ENCODE measurements at regions of chr17 and their contacts with region 1.

Region 1: DNA sequence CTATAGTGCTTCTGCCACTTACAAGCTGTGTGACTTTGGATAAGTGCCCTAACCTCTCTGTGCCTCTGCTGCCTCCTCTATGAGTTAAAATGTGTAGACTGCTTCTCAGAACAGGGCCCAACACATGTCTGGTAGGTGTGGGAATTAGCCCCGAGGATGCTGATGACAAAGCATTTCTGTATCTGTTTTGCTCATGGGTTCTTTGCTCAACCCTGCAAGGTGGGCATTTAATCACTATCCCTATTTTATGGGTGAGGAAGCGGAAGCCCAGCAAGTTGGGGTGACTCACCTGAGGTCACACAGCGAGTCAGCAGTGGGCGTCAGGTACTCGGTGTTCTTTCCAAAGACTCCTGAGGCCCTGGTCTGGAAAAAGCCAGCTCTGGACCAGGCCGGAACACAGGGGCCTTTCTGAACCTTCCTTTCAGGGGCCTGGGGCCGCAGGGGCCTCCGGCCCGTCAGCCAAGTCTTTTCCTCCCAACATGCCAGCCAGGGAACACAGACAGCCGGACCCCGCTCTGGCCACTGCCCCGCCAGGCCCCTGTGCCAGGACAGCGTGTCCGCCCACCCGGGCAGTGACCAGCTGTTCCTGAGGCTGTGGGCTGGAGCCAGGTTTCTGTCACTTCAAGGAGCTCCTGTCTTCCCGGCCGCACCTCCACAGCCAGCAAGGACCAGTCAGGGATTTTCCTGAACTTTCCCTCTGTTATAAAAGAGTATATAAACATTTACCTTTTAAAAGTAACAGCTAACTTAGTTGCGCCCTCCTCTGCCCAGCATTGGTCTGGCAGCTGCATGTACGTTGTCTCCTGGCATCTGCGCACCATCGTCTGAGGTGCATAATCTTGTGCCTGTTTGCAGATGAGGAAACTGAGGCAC is 62.5 kb downstream of the SREBF1 start:
- DNase-seq: peak in 2 of 3 donors; percentile 55 to 59
- H3K4me3 ChIP-seq: no peak overlapping the region
- H3K27ac ChIP-seq: no peak overlapping the region
- H3K4me1 ChIP-seq: peaks cover 0 to 33% (median 19%) of the 10 kb centered on the region in 4 experiments
- H3K27me3 ChIP-seq: no peaks in the 10 kb centered on the region

Region 2: DNA sequence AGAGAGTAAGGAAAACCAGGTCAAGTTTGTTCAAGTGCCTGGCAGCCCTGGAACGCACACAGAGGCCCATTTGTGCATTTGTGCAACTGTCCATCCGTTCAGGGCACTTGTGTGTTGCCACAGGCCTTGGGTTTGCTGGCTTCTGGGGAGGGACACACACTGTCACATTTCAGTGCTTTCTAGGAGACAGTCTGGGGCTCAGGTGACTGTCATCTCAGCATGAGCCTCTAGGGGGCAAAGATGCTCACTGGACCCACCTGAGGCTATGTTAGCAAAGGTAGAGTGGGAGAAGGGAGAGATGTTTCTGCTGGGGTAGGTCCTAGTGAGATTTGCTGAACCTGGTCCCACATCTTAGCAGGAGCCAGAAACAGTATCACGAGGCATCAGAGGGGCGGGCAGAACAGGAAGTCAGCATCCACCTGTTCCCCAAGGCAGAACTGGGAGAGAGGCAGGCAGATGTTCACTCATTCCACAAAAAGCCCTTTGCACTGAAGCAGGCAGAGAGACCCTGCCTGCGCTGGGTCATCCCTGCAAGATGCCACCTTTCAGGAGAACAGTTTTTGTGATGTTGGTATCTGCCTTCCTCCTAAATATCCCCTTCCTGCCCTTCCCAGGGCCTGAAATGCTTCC is 44.5 kb before region 1 on chr17:
- CTCF ChIA-PET with region 1: interaction called, 13 read pairs
- POLR2A ChIA-PET with region 1: no interaction called
- DNase-seq: peak in 2 of 3 donors; percentile 33 to 41
- H3K4me3 ChIP-seq: no peak overlapping the region
- H3K27ac ChIP-seq: no peak overlapping the region
- H3K4me1 ChIP-seq: peaks cover 7 to 47% (median 33%) of the 10 kb centered on the region in 4 experiments
- H3K27me3 ChIP-seq: no peaks in the 10 kb centered on the region

Region 3: DNA sequence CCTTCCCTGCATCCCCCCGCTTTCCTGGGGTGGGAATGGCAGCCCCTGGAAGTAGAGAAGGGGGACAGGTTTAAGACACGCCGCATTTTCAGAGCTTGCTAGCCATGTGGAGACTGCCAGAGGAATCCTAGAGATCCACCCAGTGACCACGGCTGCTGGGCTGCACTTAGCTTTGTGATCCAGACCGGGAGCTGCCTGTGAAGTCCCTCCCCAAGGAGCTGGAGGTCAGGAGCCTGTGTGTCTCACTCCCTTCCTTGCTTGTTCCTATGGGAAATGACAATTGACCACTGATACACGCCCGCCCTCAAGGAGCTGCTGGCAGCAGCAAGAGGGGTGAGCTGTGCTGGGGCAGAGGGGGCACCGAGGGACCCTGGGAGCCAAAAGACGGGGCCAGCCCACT is 11.1 kb before region 1 on chr17:
- CTCF ChIA-PET with region 1: interaction called, 16 read pairs
- POLR2A ChIA-PET with region 1: interaction called, 3 read pairs
- DNase-seq: no peak
- H3K4me3 ChIP-seq: peak overlapping the region in 2 of 7 experiments; percentile 5 to 13
- H3K27ac ChIP-seq: peak overlapping the region in 1 of 2 experiments; percentile 73
- H3K4me1 ChIP-seq: peaks cover 5 to 99% (median 93%) of the 10 kb centered on the region in 4 experiments
- H3K27me3 ChIP-seq: no peaks in the 10 kb centered on the region

Region 4: GRCh38 chr17:17819561-17819995 is 45.3 kb after region 1 on chr17:
- CTCF ChIA-PET with region 1: no interaction called
- POLR2A ChIA-PET with region 1: no interaction called
- DNase-seq: peak; percentile 49 to 77 (median 74)
- H3K4me3 ChIP-seq: no peak overlapping the region
- H3K27ac ChIP-seq: no peak overlapping the region
- H3K4me1 ChIP-seq: peaks cover 6 to 52% (median 27%) of the 10 kb centered on the region in 4 experiments
- H3K27me3 ChIP-seq: no peaks in the 10 kb centered on the region

Region 5: GRCh38 chr17:17836250-17836817 is 62.1 kb after region 1 on chr17:
- CTCF ChIA-PET with region 1: no interaction called
- POLR2A ChIA-PET with region 1: no interaction called
- DNase-seq: peak; percentile 90 to 96 (median 92)
- H3K4me3 ChIP-seq: peak overlapping the region; percentile 62 to 91 (median 85)
- H3K27ac ChIP-seq: peak overlapping the region; percentile 58 to 76
- H3K4me1 ChIP-seq: peaks cover 18 to 73% (median 69%) of the 10 kb centered on the region in 4 experiments
- H3K27me3 ChIP-seq: no peaks in the 10 kb centered on the region

Region 6: DNA sequence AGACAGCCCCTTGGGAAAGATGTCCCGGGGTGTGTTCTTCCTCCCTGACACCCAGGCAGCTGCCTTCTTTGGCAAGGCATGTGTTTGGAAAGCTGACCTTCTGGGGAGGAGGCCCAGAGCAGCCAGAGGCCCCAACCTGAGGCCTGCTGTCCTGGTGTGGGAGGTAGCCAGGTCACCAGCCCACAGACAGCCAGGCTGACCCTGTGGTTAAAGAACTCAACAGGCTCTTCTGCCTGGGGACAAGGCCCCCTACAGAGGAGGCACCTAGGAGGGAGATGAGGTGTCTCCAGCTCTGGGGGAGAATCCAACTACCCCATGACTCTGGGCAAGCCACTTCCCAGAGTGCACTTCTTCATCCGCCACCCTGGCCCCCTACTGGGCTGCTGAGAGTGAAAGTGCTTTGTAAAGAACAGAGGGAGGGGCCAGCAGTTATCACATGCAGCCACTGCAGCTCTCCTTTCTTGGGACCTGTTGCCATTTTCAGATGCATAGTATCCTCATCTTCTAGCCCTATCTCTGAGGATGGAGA is 75.7 kb after region 1 on chr17:
- CTCF ChIA-PET with region 1: no interaction called
- POLR2A ChIA-PET with region 1: no interaction called
- DNase-seq: peak; percentile 56 to 85 (median 85)
- H3K4me3 ChIP-seq: peak overlapping the region in 1 of 7 experiments; percentile 33
- H3K27ac ChIP-seq: peak overlapping the region in 1 of 2 experiments; percentile 51
- H3K4me1 ChIP-seq: peaks cover 0 to 56% (median 46%) of the 10 kb centered on the region in 4 experiments
- H3K27me3 ChIP-seq: no peaks in the 10 kb centered on the region